ENCODE measurements at regions of chr5 and their contacts with region 1.

Region 1: GRCh38 chr5:163379298-163380155 is 57.9 kb upstream of the CCNG1 start:
- DNase-seq: peak; percentile 31 to 86
- H3K4me3 ChIP-seq: no peak overlapping the region
- H3K27ac ChIP-seq: peak overlapping the region; percentile 65
- H3K4me1 ChIP-seq: peaks cover 17% of the 10 kb centered on the region
- H3K27me3 ChIP-seq: no peaks in the 10 kb centered on the region
- CTCF ChIP-seq: no peak

Region 2: DNA sequence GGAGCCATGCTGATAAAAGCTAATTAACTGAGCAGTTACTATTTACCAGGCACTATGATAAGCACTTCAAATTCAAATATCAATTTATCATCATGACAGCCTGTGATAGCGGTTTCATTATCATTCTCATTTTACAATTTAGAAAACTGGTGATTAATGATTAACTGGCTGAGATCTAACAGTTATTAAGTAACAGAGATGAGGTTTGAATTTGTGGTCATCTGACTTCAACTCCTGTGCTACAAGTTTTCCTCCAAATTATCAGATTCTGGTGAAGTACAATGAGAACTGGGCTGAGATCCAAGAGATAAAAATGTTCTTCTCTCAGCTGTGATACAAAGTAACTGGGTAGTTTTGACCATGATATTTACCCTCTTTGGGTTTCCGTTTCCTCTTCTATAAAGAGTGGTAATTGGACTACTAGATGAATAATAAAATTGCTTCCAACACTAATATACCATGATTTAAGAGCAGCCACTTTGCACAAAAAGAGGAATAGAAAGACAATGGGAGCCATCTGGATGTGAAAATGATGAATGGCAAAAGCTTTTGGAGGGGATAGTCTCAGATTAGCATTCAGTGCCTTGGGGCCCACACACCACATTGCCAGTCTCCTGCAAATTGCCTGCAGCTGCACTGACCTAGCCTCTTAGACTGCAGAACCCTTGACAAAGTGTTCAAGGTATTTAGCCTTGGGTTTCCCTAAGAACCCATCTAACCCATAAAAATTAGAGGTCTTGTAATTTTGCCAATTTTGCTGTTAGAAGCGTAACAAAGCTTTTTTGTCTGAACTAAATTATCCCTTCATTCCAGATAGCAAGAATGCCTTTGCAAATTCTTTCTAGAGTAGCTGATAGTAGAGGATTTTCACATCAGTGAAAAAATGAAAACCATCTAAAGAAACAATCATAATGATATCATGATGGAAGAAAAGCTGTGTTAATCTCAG is 16.4 kb before region 1 on chr5:
- CTCF ChIA-PET with region 1: no interaction called
- POLR2A ChIA-PET with region 1: no interaction called
- intact Hi-C with region 1: no loop called
- DNase-seq: no peak
- H3K4me3 ChIP-seq: no peak overlapping the region
- H3K27ac ChIP-seq: no peak overlapping the region
- H3K4me1 ChIP-seq: no peaks in the 10 kb centered on the region
- H3K27me3 ChIP-seq: peaks cover 11% of the 10 kb centered on the region; the same call in 1 of the 2 replicates
- CTCF ChIP-seq: no peak

Region 3: GRCh38 chr5:163437309-163438182 is 58.0 kb after region 1 on chr5 and contains the start of gene CCNG1:
- CTCF ChIA-PET with region 1: no interaction called
- POLR2A ChIA-PET with region 1: interaction called, 3 read pairs
- intact Hi-C with region 1: loop called (anchors 5 kb)
- DNase-seq: peak; percentile 91 to 95
- H3K4me3 ChIP-seq: peak within 1 kb of the TSS; percentile 85
- H3K27ac ChIP-seq: peak within 1 kb of the TSS; percentile 56
- H3K4me1 ChIP-seq: peaks cover 28% of the 10 kb centered on the region
- H3K27me3 ChIP-seq: no peaks in the 10 kb centered on the region
- CTCF ChIP-seq: no peak
- total RNA-seq, gene CCNG1: 112 and 170 TPM in 2 replicates